Cardiac septum (tissue), 1 donor: ENCODE measurements at regions of chr20 and their contacts with region 1.

Region 1: DNA sequence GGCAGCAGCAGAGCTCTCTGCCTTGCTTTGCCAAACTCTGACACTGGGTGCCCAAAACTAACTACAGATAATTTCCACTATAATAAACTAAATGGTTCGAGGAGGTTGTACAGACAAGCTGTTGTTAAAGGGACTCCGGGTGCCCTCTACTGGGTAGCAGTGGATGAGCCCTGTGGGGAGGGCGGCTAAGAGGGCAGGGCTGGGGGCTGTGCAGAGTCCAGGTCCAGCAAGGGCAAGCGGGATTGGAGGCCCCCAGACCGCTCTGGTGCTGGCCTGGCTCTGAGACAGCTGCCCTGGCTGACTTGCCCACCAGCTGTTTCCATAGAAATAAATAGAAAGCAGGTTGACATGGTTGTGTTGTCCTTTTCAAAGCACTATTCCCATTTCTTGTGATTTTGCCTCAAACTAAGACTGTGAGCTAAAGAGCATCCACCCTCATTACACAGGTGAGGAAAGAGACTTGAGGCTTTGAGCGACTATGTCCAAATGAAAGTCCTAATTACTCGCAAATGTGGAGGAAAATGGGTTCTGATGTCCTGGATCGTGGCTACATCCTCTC is 167.6 kb upstream of the CST7 start:
- DNase-seq: peak; percentile 62

Region 2: DNA sequence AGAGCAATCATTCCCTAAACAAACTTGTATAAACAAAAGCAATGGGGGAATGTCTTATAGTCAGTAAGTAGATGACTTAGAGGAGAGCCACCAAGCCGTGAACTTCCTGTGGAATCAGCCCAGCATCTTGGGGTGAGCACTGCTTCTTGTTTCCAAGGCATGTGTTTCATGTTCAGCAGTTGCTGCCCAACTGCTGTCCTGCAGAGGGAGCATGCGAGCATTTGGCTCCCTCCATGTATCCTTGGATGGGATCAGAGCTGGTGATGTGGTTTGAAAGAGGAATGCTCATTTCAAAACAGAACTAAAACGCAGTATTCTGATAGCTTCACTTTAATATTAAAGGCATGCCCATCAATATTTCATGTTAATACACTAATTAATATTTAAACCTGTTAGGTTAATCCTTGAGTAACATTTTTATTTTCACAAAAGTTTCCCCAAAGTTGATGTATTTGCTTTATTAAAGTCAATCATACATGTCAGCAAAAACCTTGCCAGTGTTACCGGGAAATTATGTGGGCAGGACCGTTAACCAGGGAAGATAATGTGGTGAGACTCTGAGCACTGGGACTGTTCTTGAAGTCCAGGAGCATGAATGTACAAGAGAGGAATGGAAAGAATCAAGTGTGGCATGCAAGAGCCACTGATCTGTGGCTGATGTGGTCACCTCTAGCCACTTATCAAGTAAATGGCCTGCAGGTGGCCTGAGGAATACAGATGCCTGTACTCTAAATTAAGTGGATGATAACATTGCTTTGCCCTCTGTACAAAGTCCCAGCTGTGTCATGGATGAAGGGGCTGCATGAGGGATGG is 620.7 kb before region 1 on chr20:
- intact Hi-C with region 1: loop called (anchors 5 kb)
- DNase-seq: no peak

Region 3: DNA sequence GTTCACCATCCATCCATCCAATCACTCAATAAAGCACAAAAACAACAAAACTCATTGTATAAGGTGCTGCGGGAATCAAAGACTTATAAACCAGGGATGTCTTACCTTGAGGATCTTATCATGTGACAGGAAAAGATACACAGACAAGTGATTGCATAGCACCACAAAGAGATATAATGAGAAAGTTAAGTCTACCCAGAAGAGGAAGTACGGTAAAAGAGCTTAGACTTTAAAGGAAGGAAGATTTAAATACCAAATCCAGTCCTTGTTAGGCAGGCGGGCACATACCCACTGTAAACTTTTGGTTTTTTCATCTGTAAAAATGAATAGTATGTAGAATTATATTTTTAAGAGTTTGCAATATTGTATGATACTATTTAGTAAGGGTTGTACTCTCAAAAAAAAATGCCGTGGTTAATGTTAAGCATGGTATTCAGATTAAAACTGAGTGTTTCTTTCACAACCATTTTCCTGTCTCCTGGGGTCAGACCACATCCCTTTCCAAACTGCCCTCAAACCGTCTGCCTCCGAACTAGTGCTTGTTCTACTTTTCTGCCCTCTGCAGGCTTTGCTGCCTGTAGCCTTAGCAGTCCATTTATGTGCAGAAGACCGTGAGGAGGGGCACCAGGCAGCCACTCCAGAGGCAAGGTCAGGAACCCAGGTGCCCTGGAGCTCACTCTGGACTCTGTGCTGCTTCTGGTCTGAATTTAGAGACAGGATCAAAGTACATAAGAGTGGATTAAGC is 491.6 kb before region 1 on chr20:
- intact Hi-C with region 1: no loop called
- DNase-seq: no peak

Region 4: GRCh38 chr20:24303381-24303780 is 478.1 kb before region 1 on chr20:
- intact Hi-C with region 1: loop called (anchors 5 kb)
- DNase-seq: no peak

Region 5: GRCh38 chr20:24672886-24673677 is 108.4 kb before region 1 on chr20:
- intact Hi-C with region 1: no loop called
- DNase-seq: peak; percentile 46

Region 6: GRCh38 chr20:24721891-24722568 is 59.5 kb before region 1 on chr20:
- intact Hi-C with region 1: no loop called
- DNase-seq: no peak